Activated T-helper 1 cell treated with anti-CD3 and anti-CD28 coated beads, Interleukin-12 subunit alpha, Interleukin-12 subunit beta, Interleukin-2, Interleukin-4 antibody, amounts not matched to agents 30 ng/mL and 10 ng/mL and 1 ng/mL, durations not matched to agents 14 hours and 24 hours and 36 hours (primary cell): ENCODE measurements at regions of chr12 and their contacts with region 1.

Region 1: DNA sequence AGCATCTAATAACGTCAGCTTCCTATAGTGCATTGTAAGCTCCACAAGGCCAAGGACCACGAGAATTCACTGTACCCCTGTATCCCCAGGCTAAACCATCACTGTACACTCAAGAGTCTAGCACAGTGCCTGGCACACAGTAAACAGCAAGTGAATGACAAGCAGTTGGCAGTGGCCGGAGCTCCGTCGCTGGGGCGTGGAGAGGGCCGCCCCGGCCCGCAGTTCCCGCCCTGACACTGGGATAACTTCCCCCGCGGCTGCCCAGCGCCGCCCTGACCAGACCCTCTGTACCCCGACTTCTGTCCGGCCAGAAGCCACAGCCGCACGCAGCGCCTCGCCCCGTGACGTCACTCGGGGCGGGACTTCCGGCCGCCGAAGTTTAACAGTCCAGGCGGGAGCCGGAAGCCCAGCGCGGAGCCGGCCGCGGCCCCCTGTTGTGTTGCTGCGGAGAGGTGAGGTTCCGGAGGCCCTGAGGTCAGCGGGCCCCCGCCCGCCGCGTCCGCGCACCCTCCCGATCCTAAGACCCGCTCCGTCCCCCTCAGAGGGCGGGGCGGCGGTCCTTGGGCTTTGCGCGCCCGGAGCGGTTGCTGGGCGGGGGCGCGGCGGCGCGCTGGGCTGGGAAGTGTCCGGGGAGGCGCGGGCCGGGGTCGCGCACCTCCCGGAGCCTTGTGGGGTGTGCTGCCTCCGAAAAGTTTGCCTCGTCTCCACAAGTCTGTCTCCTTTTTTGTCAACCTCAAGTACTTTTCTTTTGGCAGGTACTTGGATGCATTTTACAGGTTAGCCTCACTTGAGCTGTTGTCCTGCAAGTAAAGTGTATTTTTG is at the start of gene NEDD1:
- DNase-seq: peak; percentile 83
- H3K4me3 Mint-ChIP-seq: peak within 1 kb of the TSS; percentile 88
- H3K27ac Mint-ChIP-seq: peak within 1 kb of the TSS; percentile 97
- H3K4me1 Mint-ChIP-seq: peaks cover 51% of the 10 kb centered on the region
- H3K27me3 Mint-ChIP-seq: peaks cover 3% of the 10 kb centered on the region
- total RNA-seq, gene NEDD1: 61.1 and 65.3 TPM in 2 replicates

Region 2: GRCh38 chr12:95942524-95943329 is 964.3 kb before region 1 on chr12 and contains the start of gene CCDC38:
- intact Hi-C with region 1: loop called (anchors 2 kb)
- DNase-seq: peak; percentile 78
- H3K4me3 Mint-ChIP-seq: peak within 1 kb of the TSS; percentile 92
- H3K27ac Mint-ChIP-seq: peak within 1 kb of the TSS; percentile 95
- H3K4me1 Mint-ChIP-seq: peaks cover 5% of the 10 kb centered on the region
- H3K27me3 Mint-ChIP-seq: peaks cover 24% of the 10 kb centered on the region
- total RNA-seq, gene CCDC38: not detected in 2 replicates

Region 3: GRCh38 chr12:96427269-96427729 is 479.8 kb before region 1 on chr12:
- intact Hi-C with region 1: loop called (anchors 10 kb)
- DNase-seq: no peak
- H3K4me3 Mint-ChIP-seq: peak overlapping the region; percentile 1
- H3K27ac Mint-ChIP-seq: peak overlapping the region; percentile 53
- H3K4me1 Mint-ChIP-seq: peaks cover 52% of the 10 kb centered on the region
- H3K27me3 Mint-ChIP-seq: peaks cover 5% of the 10 kb centered on the region

Region 4: GRCh38 chr12:96719660-96720363 is 187.2 kb before region 1 on chr12:
- intact Hi-C with region 1: loop called (anchors 1 kb)
- DNase-seq: peak; percentile 11
- H3K4me3 Mint-ChIP-seq: peak overlapping the region; percentile 87
- H3K27ac Mint-ChIP-seq: peak overlapping the region; percentile 80
- H3K4me1 Mint-ChIP-seq: peaks cover 18% of the 10 kb centered on the region
- H3K27me3 Mint-ChIP-seq: no peaks in the 10 kb centered on the region

Region 5: DNA sequence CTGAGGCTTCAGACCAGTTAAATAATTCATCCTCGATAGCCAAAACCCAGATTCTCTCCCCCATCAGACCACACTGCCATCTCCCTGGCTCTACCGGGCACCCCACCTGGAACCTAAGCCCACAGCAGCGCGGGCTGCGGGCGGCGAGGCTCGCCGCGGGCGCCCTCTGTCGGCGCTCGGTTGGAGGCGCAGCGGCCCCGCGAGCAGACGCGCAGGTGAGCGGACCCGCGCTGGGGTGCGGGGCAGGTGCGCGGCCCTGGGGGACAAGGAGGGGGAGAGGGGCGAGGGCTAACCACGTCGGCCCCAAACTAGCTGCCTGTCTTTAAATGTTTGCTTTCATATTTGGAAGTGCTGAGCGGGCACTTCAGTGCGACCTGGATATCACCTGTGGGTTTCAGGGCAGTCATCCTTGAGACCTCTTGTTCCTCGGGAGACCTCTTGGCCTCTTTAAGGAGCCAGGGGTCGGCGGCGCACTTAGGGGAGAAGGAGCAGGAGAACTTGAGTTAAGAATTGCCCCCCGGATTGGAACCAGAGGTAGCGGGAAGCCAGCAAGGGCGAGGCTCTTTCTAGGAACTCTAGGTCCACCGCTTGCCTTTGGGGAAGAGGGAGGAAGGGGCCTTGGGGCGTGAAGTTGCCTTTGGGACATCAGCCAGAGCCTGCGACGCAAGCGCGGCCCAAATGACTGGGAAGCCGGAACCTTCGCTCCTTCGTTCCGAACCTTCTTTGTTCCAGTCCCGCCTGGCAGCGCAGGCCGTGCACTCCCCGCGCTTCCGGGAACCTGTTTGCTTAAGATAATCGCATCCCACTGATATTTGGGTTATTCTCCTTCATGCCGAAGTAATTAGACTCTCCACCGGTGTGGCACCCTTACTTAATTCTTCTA is 78.7 kb after region 1 on chr12:
- intact Hi-C with region 1: loop called (anchors 2 kb)
- DNase-seq: peak; percentile 20
- H3K4me3 Mint-ChIP-seq: peak overlapping the region; percentile 60
- H3K27ac Mint-ChIP-seq: no peak overlapping the region
- H3K4me1 Mint-ChIP-seq: no peaks in the 10 kb centered on the region
- H3K27me3 Mint-ChIP-seq: peaks cover 40% of the 10 kb centered on the region

Region 6: DNA sequence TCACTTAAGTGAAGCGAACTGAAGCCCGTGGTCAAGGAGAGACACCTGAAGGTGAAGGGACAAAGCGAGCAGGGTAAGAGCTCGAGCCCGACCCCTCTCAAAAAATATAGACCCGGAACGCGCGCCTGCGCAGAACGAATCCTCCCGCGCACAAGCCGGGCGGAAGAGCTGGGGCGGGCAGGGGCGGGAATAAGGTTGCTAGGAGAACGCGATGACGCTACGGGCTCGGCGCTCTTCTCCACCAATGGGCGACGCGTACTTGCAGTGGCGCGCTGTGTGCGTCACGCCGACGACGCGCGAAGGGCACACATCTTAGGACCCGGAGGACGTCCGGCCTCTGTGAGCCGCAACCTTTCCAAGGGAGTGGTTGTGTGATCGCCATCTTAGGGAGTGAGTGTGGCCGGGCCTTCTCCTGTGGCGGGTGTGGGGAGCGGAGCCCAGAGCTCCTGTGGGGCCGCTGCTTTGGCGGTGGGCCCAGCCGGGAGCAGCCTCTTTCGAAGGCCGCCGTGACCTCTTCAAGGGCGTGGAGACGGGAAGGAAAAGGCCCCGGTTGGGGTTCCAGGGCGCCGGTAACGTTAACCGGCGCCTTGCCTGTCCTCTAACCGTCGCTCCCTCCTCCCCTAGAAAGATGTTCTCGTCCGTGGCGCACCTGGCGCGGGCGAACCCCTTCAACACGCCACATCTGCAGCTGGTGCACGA is 1686.4 kb after region 1 on chr12 and contains the start of gene SLC25A3:
- intact Hi-C with region 1: loop called (anchors 5 kb)
- DNase-seq: peak; percentile 92
- H3K4me3 Mint-ChIP-seq: peak within 1 kb of the TSS; percentile 96
- H3K27ac Mint-ChIP-seq: peak within 1 kb of the TSS; percentile 99
- H3K4me1 Mint-ChIP-seq: peaks cover 29% of the 10 kb centered on the region
- H3K27me3 Mint-ChIP-seq: no peaks in the 10 kb centered on the region
- total RNA-seq, gene SLC25A3: 570 and 580 TPM in 2 replicates